ENCODE measurements at regions of chr9 and their contacts with region 1.

Region 1: DNA sequence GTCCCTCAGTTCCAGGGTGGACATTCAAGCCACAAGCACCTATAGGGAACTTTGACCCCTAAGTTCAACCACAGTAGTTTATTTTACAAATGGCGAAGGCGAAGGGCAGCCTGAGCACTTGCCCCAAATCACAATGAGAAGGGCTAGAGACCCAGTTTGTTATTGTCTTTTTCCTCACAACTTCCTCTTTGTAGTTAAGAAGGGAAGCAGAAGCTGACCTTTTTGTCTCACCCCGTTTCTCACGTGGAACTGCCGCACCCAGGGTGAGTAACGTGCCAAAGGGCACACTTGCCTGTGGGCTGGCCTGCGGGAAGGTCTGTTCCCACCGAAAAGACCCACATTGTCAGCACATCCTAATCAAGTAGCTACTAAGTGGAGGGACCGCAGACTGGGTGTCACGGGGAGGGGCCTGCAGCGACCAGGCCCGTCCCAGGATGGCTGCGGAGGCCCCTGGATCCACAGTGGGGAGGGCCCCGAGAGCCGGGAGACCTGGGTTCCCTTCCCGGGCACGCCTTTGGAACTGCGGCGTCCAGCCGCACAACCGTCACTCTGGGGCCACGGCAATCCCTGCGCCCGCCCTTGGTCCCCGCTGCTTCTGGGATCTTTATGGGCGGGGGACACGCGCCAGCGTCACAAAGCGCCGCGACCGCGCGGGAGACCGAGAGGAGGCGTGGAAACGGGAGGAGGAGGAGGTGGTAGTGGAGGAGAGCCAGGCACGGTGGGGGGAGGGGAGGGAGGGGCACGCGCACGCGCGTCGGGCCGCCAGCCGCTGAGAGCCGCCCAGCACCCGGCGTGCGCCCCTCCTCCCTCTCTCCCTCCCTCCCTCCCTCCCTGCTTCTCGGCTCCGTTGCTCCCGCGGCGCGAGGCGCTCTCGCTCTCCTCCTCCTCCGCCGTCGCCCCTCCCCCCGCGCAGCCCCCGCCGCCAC is at the start of gene UBE2R2:
- DNase-seq: peak; percentile 91 to 95 (median 92)
- ATAC-seq: peak; percentile 81 to 89 (median 84)
- H3K4me3 ChIP-seq: peak within 1 kb of the TSS; percentile 66 to 93 (median 76)
- H3K27ac ChIP-seq: peak within 1 kb of the TSS; percentile 89 to 99 (median 96)
- H3K4me1 ChIP-seq: peaks cover 6 to 39% (median 20%) of the 10 kb centered on the region in 3 donors
- H3K27me3 ChIP-seq: no peaks in the 10 kb centered on the region
- CTCF ChIP-seq: no peak
- total RNA-seq, gene UBE2R2: 33.1 to 44.8 (median 36.2) TPM

Region 2: DNA sequence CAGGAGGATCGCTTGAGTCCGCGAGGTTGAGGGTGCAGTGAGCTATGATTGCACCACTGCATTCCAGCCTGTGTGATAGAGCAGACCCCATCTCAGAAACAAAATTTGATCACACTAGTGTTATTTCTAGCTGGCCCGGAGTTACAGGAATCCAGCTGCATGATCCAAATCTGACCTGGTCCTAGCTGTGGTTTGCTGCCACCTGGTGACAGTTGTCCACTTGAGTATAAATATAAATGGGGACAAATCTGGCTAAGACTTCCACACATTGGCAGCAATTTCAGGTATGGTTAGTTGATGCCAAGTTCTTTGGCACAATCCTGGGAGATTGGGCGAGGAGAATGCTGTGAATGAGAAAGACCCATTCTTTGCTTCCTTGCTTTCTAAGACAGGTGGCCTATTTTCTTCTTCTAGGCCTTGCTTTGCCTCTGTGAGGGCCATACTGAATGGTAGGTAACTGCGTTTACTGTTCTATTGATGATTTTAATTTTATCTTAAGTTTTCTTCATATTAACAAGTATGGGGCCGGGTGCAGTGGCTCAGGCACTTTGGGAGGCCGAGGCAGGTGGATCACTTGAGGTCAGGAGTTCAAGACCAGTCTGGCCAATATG is 35.7 kb after region 1 on chr9:
- intact Hi-C with region 1: loop called in 1 of 3 experiments (anchors 5 kb)
- DNase-seq: peak in 5 of 6 donors; percentile 71 to 87 (median 81)
- ATAC-seq: peak; percentile 73 to 87 (median 84)
- H3K4me3 ChIP-seq: no peak overlapping the region
- H3K27ac ChIP-seq: peak overlapping the region in 2 of 4 donors; percentile 69 to 72
- H3K4me1 ChIP-seq: peaks cover 26 to 71% (median 69%) of the 10 kb centered on the region in 3 donors
- H3K27me3 ChIP-seq: no peaks in the 10 kb centered on the region
- CTCF ChIP-seq: peak; percentile 26 to 57 (median 42)

Region 3: GRCh38 chr9:33972698-33973097 is 156.1 kb after region 1 on chr9:
- intact Hi-C with region 1: no loop called
- DNase-seq: no peak
- ATAC-seq: no peak
- H3K4me3 ChIP-seq: no peak overlapping the region
- H3K27ac ChIP-seq: no peak overlapping the region
- H3K4me1 ChIP-seq: peaks cover 0 to under 1% (median 0%) of the 10 kb centered on the region in 3 donors
- H3K27me3 ChIP-seq: no peaks in the 10 kb centered on the region
- CTCF ChIP-seq: no peak

Region 4: GRCh38 chr9:34690983-34691935 is 874.7 kb after region 1 on chr9 and contains the start of gene CCL19:
- intact Hi-C with region 1: no loop called
- DNase-seq: no peak
- ATAC-seq: no peak
- H3K4me3 ChIP-seq: no peak within 1 kb of the TSS
- H3K27ac ChIP-seq: no peak within 1 kb of the TSS
- H3K4me1 ChIP-seq: no peaks in the 10 kb centered on the region
- H3K27me3 ChIP-seq: no peaks in the 10 kb centered on the region
- CTCF ChIP-seq: no peak
- total RNA-seq, gene CCL19: 0.35 to 2.8 (median 1.8) TPM in 4 of 6 donors, not detected in the others